ENCODE measurements at regions of chr9 and their contacts with region 1.

Region 1: DNA sequence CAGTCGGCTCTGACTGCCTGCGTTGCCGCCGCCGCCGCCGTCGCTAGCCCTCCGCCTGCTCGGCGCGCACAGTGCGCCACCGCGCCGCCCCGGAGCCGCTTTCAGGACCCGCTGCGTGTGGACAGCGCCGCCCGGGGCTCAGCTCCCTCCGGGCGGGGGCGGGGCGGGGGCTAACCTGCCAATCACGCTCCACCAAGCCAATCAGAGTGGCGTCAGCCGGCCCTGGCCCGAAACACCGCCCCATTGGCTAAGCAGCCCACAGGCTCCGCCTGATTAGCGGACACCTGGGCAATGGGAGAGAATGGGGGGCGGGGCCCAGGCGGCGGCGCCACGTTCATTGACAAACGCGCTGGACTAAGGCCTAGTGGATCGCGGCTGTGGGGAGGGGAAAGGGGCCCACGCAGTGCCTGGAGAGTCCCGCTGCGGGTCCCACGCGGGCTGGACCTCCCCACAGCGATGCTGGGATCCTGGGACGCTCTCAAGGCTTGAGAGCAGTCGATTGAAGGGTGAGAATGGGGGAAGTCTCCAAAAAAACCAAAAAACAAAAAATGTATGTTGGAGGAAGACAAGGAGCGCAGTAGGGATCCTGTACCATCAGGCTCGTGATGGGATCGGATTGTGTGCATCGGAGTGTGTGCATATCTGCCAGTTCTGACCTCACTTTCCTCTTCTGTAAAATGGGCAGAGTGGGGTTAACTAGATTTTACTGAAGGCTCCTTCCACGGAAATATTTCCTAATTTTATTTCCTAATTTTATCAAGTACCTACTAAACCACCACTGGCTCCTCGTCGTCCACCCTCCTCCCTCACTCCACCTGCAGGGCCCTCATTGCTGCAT is 6.3 kb downstream of the PAX5 start:
- DNase-seq: peak; percentile 84 to 90 (median 89)
- ATAC-seq: peak; percentile 97 to 99 (median 98)
- H3K4me3 ChIP-seq: peak overlapping the region in 9 of 12 donors; percentile 13 to 57 (median 28)
- H3K27ac ChIP-seq: no peak overlapping the region
- H3K4me1 ChIP-seq: peaks cover 10 to 50% (median 32%) of the 10 kb centered on the region in 12 donors
- H3K27me3 ChIP-seq: peaks cover 82 to 100% (median 100%) of the 10 kb centered on the region in 9 donors
- CTCF ChIP-seq: no peak
- POLR2A ChIP-seq: no peak

Region 2: DNA sequence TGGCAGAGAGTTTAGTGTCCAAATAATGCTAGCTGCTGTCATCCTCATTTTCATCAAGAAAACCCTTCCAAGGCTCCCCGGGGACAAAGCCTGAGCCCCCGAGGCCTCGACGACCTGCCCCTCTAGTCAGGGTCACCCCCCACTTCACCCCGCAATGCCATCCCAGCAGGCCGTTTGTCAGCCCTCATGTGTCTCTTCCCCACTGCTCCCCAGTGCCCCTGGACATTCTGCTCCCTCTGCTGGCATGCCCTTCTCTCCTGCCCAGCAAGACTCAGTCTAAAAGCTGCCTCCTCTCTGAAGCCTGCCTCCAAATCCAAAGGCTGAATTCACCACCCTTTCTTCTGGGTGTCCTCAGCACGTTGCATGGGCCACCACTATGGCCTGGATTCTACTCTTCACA is 53.1 kb before region 1 on chr9:
- intact Hi-C with region 1: loop called in 1 of 10 experiments (anchors 5 kb)
- DNase-seq: peak in 1 of 5 donors; percentile 7
- ATAC-seq: no peak
- H3K4me3 ChIP-seq: no peak overlapping the region
- H3K27ac ChIP-seq: no peak overlapping the region
- H3K4me1 ChIP-seq: no peaks in the 10 kb centered on the region
- H3K27me3 ChIP-seq: peaks cover 0 to 52% (median 9%) of the 10 kb centered on the region in 9 donors
- CTCF ChIP-seq: no peak
- POLR2A ChIP-seq: no peak

Region 3: DNA sequence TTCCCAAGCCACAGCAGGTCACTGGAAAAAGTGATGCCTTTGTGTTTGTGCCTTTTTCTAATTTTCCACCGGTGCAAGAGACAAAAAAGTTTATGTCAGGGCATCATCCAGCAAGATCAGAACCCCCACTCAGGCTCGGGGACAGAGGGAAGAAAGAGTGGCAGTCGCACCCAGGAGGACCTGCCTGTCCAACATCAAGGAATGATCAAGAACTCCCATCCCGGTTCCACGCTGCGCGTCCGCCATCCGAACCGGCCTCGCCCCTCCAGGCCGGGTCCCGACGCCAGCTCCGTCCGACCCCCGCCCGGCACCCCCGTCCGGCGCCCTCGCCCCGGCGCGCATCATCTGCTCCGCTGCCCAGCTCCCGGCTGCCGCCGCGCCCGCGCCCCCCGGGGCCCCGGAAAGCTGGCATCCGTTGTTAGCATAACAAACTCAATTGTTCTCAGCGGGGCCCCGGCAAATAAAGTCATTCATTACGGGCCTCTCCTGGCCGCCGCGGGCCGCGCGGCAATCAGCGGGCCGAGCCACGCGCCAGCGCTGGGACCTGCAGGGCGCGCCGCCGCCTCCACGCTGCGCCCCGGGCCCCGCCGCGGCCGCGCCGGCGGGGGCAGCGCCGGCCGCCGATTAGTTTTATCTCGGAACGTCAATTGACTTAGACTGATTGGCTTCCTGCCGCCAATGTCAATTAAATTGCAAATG is 41.9 kb before region 1 on chr9:
- intact Hi-C with region 1: no loop called
- DNase-seq: no peak
- ATAC-seq: no peak
- H3K4me3 ChIP-seq: peak overlapping the region in 3 of 12 donors; percentile 15 to 26 (median 25)
- H3K27ac ChIP-seq: no peak overlapping the region
- H3K4me1 ChIP-seq: peaks cover 0 to 15% (median 2%) of the 10 kb centered on the region in 12 donors
- H3K27me3 ChIP-seq: peaks cover 32 to 97% (median 69%) of the 10 kb centered on the region in 9 donors
- CTCF ChIP-seq: no peak
- POLR2A ChIP-seq: no peak

Region 4: GRCh38 chr9:37079370-37080164 is 51.8 kb after region 1 on chr9:
- intact Hi-C with region 1: loop called in 1 of 10 experiments (anchors 10 kb)
- DNase-seq: peak; percentile 92 to 95 (median 95)
- ATAC-seq: peak; percentile 99
- H3K4me3 ChIP-seq: peak overlapping the region; percentile 64 to 98 (median 86)
- H3K27ac ChIP-seq: peak overlapping the region; percentile 31 to 92 (median 84)
- H3K4me1 ChIP-seq: peaks cover 0 to 44% (median 15%) of the 10 kb centered on the region in 12 donors
- H3K27me3 ChIP-seq: peaks cover 0 to 6% (median 0%) of the 10 kb centered on the region in 9 donors
- CTCF ChIP-seq: no peak
- POLR2A ChIP-seq: peak in 1 of 2 donors; percentile 46

Measured in heart left ventricle (tissue), 16 donors.